ENCODE measurements at regions of chr12 and their contacts with region 1.

Region 1: GRCh38 chr12:110546339-110546738 is 36.8 kb downstream of the PPTC7 start:
- DNase-seq: no peak
- ATAC-seq: no peak
- H3K4me3 ChIP-seq: no peak overlapping the region
- H3K27ac ChIP-seq: peak overlapping the region; percentile 42
- H3K4me1 ChIP-seq: peaks cover 14% of the 10 kb centered on the region
- H3K27me3 ChIP-seq: no peaks in the 10 kb centered on the region

Region 2: GRCh38 chr12:110421159-110421661 is 125.1 kb before region 1 on chr12:
- intact Hi-C with region 1: no loop called
- DNase-seq: no peak
- ATAC-seq: no peak
- H3K4me3 ChIP-seq: no peak overlapping the region
- H3K27ac ChIP-seq: no peak overlapping the region
- H3K4me1 ChIP-seq: no peaks in the 10 kb centered on the region
- H3K27me3 ChIP-seq: no peaks in the 10 kb centered on the region

Region 3: GRCh38 chr12:110583137-110584059 is 37.1 kb after region 1 on chr12 and contains the start of gene PPTC7:
- intact Hi-C with region 1: loop called in 1 of 4 experiments (anchors 5 kb)
- DNase-seq: peak; percentile 97 to 99 (median 99)
- ATAC-seq: peak; percentile 98
- H3K4me3 ChIP-seq: peak within 1 kb of the TSS; percentile 95
- H3K27ac ChIP-seq: peak within 1 kb of the TSS; percentile 83
- H3K4me1 ChIP-seq: peaks cover 13% of the 10 kb centered on the region
- H3K27me3 ChIP-seq: no peaks in the 10 kb centered on the region
- total RNA-seq, gene PPTC7: 46.6 to 82.8 (median 56.6) TPM

Region 4: GRCh38 chr12:110677206-110677911 is 131.0 kb after region 1 on chr12:
- intact Hi-C with region 1: no loop called
- DNase-seq: no peak
- ATAC-seq: peak; percentile 38 to 43
- H3K4me3 ChIP-seq: no peak overlapping the region
- H3K27ac ChIP-seq: no peak overlapping the region
- H3K4me1 ChIP-seq: peaks cover 3% of the 10 kb centered on the region
- H3K27me3 ChIP-seq: no peaks in the 10 kb centered on the region